ENCODE measurements at regions of chr1 and their contacts with region 1.

Region 1: GRCh38 chr1:148263128-148263905 is 111.2 kb upstream of the NBPF11 start:
- DNase-seq: peak; percentile 100
- H3K4me3 ChIP-seq: peak overlapping the region; percentile 42 to 59 (median 54)
- H3K27ac ChIP-seq: peak overlapping the region; percentile 98
- H3K4me1 ChIP-seq: peaks cover 13% of the 10 kb centered on the region
- H3K27me3 ChIP-seq: no peaks in the 10 kb centered on the region
- CTCF ChIP-seq: no peak

Region 2: DNA sequence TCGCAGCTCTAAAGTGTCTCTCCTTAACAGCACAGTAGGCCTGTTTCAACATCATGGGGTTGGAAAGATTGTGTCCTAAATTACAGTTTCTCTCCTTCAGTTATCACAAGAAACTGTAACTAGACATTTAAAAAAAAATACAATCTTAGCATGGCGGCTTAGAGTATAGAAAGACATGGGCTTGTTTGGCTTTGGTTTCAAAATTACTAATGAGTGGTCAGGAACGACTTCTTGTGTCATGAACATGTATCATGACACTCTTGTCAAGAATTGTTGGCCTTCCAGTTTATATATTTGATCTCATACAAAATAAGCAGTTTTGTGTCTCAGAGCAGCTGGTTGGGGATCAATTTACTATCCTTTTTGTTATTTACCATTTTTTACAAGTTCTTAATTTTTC is 358.6 kb before region 1 on chr1:
- CTCF ChIA-PET with region 1: no interaction called
- dilution Hi-C with region 1: no loop called
- in situ Hi-C with region 1: no loop called
- intact Hi-C with region 1: no loop called
- DNase-seq: no peak
- H3K4me3 ChIP-seq: no peak overlapping the region
- H3K27ac ChIP-seq: no peak overlapping the region
- H3K4me1 ChIP-seq: no peaks in the 10 kb centered on the region
- H3K27me3 ChIP-seq: no peaks in the 10 kb centered on the region
- CTCF ChIP-seq: no peak

Region 3: DNA sequence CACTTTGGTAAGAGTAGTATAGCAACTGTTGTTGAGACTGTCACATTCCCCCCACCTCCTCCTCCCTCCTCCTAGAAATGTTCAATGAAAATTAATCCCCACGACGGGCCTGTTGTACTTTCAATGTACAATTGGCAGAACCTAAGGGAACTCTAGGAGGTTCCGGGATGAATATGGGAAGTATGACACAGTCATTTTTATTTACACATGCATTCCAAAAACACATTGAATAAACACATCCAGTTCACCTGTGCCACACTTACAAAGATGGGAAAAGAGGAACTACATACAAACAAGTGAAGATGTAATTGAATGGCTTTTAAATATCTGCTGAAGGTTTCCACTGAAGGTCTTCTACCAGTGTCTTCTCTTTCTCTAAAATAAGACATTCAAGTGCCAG is 33.2 kb after region 1 on chr1:
- CTCF ChIA-PET with region 1: no interaction called
- dilution Hi-C with region 1: no loop called
- in situ Hi-C with region 1: no loop called
- intact Hi-C with region 1: no loop called
- DNase-seq: no peak
- H3K4me3 ChIP-seq: no peak overlapping the region
- H3K27ac ChIP-seq: no peak overlapping the region
- H3K4me1 ChIP-seq: no peaks in the 10 kb centered on the region
- H3K27me3 ChIP-seq: no peaks in the 10 kb centered on the region
- CTCF ChIP-seq: no peak

Region 4: GRCh38 chr1:148307583-148308190 is 44.4 kb after region 1 on chr1:
- CTCF ChIA-PET with region 1: no interaction called
- dilution Hi-C with region 1: no loop called
- in situ Hi-C with region 1: no loop called
- intact Hi-C with region 1: no loop called
- DNase-seq: no peak
- H3K4me3 ChIP-seq: no peak overlapping the region
- H3K27ac ChIP-seq: no peak overlapping the region
- H3K4me1 ChIP-seq: peaks cover 6% of the 10 kb centered on the region
- H3K27me3 ChIP-seq: peaks cover 5% of the 10 kb centered on the region
- CTCF ChIP-seq: no peak

Region 5: GRCh38 chr1:148334339-148335130 is 71.2 kb after region 1 on chr1:
- CTCF ChIA-PET with region 1: interaction called, 3 read pairs
- dilution Hi-C with region 1: no loop called
- in situ Hi-C with region 1: loop called in 1 of 2 experiments (anchors 5 kb)
- intact Hi-C with region 1: loop called (anchors 1 kb)
- DNase-seq: peak; percentile 98
- H3K4me3 ChIP-seq: peak overlapping the region; percentile 33 to 57 (median 53)
- H3K27ac ChIP-seq: peak overlapping the region; percentile 95
- H3K4me1 ChIP-seq: peaks cover 16% of the 10 kb centered on the region
- H3K27me3 ChIP-seq: no peaks in the 10 kb centered on the region
- CTCF ChIP-seq: no peak

Measured in mammary epithelial cell (primary cell).